ENCODE measurements at regions of chr15 and their contacts with region 1.

Region 1: DNA sequence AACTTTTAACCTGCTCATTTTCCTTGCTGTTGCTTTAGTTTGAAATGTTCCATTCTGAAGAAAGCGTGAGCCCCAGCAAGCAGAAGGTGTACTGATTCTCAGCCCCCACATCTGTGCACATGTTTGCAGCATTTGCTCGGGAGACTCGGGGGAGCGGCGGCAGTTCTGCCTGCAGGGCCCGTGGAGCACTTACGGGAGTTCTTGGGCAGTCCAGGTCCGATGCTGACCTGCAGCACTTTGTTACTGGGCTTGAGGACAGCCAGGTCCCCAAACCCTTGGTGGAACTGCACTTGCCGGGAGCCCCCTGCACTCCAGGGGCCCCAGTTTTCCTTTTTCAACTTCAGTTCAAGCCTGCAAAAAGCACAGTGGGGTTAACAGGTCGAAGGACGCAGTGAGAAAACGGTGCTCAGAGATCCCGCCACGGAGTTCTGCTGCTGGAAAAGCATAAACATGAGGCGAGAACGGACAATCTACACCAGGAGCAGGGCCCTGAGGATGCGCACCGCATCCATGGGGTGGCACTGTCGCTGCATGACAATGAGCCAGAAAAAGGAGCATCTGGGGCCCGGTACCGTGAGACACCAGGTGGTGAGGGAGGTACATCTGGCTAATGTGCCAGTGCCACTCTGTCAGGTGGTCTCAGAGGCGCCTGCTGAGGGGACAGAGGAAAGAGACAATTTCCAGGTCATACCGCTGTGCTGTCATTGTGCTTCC is 45.6 kb upstream of the LDHAL6B start:
- H3K4me3 Mint-ChIP-seq: no peak overlapping the region
- H3K27ac Mint-ChIP-seq: no peak overlapping the region
- H3K4me1 Mint-ChIP-seq: peaks cover 21% of the 10 kb centered on the region
- H3K27me3 Mint-ChIP-seq: no peaks in the 10 kb centered on the region

Region 2: DNA sequence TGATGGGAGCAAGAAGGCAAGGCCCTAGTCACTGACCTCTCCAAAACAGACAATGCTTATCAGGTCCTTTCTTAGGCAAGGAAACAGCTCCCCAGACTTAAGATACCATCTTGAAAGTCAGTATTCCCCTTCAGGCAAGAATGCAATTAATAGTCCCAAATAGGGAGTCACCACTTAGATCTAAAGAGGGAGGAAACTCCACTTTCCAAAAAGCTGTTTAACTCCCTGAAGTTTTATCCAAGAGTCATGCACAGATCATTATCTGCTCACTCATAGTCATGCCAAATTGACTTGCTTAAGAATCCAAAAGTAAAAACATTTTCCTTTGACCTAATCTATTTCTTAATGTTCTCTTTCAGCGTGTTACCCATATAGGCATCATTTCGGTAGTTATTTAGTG is 47.8 kb after region 1 on chr15:
- intact Hi-C with region 1: loop called (anchors 5 kb)
- H3K4me3 Mint-ChIP-seq: no peak overlapping the region
- H3K27ac Mint-ChIP-seq: no peak overlapping the region
- H3K4me1 Mint-ChIP-seq: peaks cover 8% of the 10 kb centered on the region
- H3K27me3 Mint-ChIP-seq: no peaks in the 10 kb centered on the region

Region 3: DNA sequence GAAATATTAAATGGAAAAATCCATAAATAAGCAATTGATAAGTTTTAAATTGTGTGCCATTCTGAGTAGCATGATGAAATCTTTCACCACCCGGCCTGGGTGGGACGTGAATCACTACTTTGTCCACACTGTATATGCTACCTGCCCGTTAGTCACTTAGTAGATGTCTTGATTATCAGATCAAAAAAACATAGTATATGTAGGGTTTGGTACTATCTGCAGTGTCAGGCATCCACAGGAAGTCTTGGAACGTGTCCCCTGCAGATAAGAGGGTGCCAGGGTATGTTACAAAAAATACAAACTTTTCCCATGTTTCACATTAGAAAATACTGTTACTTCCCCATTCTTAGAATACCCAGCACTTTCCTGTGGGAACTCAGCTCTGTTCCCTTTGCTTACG is 312.2 kb after region 1 on chr15:
- intact Hi-C with region 1: no loop called
- H3K4me3 Mint-ChIP-seq: no peak overlapping the region
- H3K27ac Mint-ChIP-seq: no peak overlapping the region
- H3K4me1 Mint-ChIP-seq: peaks cover 15% of the 10 kb centered on the region
- H3K27me3 Mint-ChIP-seq: no peaks in the 10 kb centered on the region

Measured in dendritic cell treated with granulocyte-macrophage colony-stimulating factor and Interleukin-4, amounts not matched to agents 40 ng/mL and 50 ng/mL, for 4 days (primary cell).